SK-N-SH (cell line): ENCODE measurements at regions of chr19 and their contacts with region 1.

Region 1: DNA sequence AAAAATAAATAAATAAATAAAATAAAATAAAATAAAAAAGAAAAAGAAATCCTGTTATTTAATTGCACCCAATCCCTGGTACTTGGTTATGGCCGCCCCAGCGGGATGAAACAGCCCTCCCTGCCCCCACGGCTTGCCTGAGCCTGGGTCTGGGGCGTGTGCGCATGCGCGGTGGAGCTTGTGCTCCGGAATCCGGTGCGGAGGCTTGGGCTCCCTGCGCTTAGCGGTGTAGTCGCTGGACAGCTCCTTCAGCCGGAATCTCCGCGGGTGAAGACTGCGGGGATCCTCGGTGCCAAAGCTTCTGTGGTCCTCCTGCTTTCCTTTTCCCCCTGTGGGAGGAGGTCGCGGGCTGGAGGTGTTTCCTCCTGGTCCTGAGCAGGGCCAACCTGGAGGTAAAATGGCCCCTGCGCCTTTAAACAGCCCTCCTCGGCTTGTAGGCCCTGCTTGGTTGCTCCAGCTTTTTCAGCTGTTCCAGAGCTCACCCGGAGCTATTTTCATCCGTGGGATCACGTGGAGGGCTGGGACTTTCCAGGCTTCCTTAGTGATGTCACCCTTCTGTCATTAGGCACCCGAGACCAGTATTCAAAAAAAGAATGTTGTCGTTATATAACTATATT is at the start of gene PLA2G4C:
- DNase-seq: peak; percentile 98
- H3K4me3 ChIP-seq: peak within 1 kb of the TSS; percentile 50 to 62
- H3K27ac ChIP-seq: peak within 1 kb of the TSS; percentile 88 to 90
- H3K4me1 ChIP-seq: no peaks in the 10 kb centered on the region; a peak in 1 of 4 replicates
- H3K27me3 ChIP-seq: no peaks in the 10 kb centered on the region
- CTCF ChIP-seq: no peak
- EP300 ChIP-seq: 0 out of 4 replicates have a peak, but pooled peaks of 1 of the 2 experiments have one; percentile 19
- RAD21 ChIP-seq: no peak
- polyA plus RNA-seq, gene PLA2G4C: 6.0 and 6.1 TPM in 2 replicates

Region 2: GRCh38 chr19:48123907-48124651 is 13.6 kb after region 1 on chr19:
- CTCF ChIA-PET with region 1: interaction called, 32 read pairs
- POLR2A ChIA-PET with region 1: interaction called, 4 read pairs
- DNase-seq: no peak
- H3K4me3 ChIP-seq: no peak overlapping the region
- H3K27ac ChIP-seq: peak overlapping the region in 1 of 2 experiments; percentile 20; a peak in 2 of 4 replicates
- H3K4me1 ChIP-seq: no peaks in the 10 kb centered on the region; a peak in 1 of 4 replicates
- H3K27me3 ChIP-seq: no peaks in the 10 kb centered on the region
- CTCF ChIP-seq: peak; percentile 27
- EP300 ChIP-seq: no peak
- RAD21 ChIP-seq: no peak

Region 3: DNA sequence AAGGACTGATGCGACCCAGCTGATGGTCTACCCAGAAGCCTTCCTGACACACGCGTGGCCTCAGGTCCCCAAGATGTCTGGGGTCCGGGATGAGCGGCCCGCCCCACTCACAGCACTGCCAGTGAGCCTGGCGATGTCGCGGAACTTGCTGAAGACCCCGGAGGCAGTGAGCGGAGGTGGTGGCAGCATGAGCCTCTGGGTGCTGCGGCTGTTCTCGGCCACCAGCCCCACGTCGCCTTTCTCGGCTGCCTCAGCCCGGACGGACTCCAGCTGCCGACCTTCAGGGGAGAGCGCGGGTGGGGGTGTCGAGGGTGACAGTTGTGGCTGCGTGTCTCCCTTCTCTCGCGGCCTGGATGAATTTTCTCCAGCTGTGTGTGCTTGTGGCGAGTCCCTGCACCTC is 27.0 kb after region 1 on chr19:
- CTCF ChIA-PET with region 1: interaction called, 12 read pairs
- POLR2A ChIA-PET with region 1: no interaction called
- DNase-seq: no peak
- H3K4me3 ChIP-seq: no peak overlapping the region
- H3K27ac ChIP-seq: no peak overlapping the region
- H3K4me1 ChIP-seq: peaks cover 0 to 2% of the 10 kb centered on the region in 2 experiments; a peak in 1 of 4 replicates
- H3K27me3 ChIP-seq: no peaks in the 10 kb centered on the region
- CTCF ChIP-seq: no peak
- EP300 ChIP-seq: no peak
- RAD21 ChIP-seq: no peak

Region 4: GRCh38 chr19:48152551-48152950 is 42.1 kb after region 1 on chr19:
- CTCF ChIA-PET with region 1: interaction called, 168 read pairs
- POLR2A ChIA-PET with region 1: interaction called, 3 read pairs
- DNase-seq: peak; percentile 65
- H3K4me3 ChIP-seq: no peak overlapping the region
- H3K27ac ChIP-seq: peak overlapping the region in 1 of 2 experiments; percentile 68; a peak in 2 of 4 replicates
- H3K4me1 ChIP-seq: no peaks in the 10 kb centered on the region; a peak in 1 of 4 replicates
- H3K27me3 ChIP-seq: no peaks in the 10 kb centered on the region
- CTCF ChIP-seq: peak; percentile 86
- EP300 ChIP-seq: no peak
- RAD21 ChIP-seq: peak; percentile 83

Region 5: DNA sequence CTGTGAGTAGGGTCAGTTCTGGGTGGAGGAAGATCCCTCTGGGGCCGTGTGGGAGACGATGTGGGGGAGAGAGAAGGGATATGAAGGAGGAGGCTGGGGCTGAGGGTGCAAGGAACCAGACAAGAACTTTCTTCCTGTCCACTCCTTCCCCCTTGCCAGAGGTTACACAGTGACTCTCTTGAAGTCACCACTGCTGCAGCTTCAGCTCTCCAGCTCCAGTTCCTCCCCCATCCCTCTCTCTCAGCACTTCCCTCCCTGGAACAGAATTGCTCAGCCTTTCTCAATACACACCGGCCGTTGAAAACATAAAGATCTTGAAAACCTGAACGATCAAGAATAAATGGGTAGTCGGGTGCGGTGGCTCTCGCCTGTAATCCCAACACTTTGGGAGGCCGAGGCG is 65.1 kb after region 1 on chr19:
- CTCF ChIA-PET with region 1: no interaction called
- POLR2A ChIA-PET with region 1: no interaction called
- DNase-seq: no peak
- H3K4me3 ChIP-seq: no peak overlapping the region
- H3K27ac ChIP-seq: no peak overlapping the region
- H3K4me1 ChIP-seq: peaks cover 0 to 10% of the 10 kb centered on the region in 2 experiments; a peak in 1 of 4 replicates
- H3K27me3 ChIP-seq: no peaks in the 10 kb centered on the region
- CTCF ChIP-seq: no peak
- EP300 ChIP-seq: no peak
- RAD21 ChIP-seq: no peak